PC-3 (cell line): ENCODE measurements at regions of chr17 and their contacts with region 1.

Region 1: DNA sequence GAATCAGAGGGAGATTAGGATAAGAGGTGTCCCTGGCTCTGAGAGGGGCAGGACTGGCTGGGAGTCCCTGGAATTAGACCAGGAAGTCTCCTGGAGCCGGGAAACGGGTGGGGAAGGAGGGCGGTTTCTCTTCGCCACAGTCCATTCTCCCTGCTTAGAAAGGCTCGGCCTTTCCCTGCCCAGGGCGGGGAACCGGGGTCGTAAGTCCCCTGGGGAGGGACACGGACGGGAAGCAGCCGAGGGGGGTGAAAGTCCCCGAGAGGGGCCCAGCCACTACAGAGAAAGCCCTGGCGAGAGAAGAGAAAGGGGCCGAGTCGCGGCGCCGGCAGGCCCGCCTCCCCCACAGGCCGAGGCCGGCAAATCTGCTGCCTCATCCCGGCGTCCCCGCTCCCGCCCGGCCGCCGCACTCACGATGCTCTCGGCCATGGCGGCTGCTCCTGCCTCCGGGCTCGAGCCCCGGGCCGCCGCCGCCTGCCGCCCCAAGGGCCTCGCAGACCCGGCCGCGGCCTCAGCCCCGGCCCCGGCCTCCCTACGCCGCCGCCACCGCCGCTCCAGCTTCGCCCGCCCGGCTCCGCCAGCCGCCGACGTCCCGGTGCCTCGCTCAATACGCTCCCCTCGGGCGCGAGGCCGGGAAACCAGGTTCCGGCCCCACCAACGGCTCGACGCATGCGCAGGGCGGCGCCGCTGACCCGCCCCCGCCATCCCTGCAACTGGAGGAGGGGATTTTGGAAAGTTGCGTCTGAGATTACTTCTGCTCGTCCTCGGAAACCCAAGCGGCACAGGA is at the starts of genes NPLOC4 and TSPAN10:
- DNase-seq: peak; percentile 88
- ATAC-seq: peak; percentile 80
- H3K4me3 ChIP-seq: peak within 1 kb of the TSS; percentile 100
- H3K27ac ChIP-seq: peak within 1 kb of the TSS; percentile 89
- H3K4me1 ChIP-seq: peaks cover 11% of the 10 kb centered on the region
- H3K27me3 ChIP-seq: no peaks in the 10 kb centered on the region
- CTCF ChIP-seq: no peak
- total RNA-seq, gene NPLOC4: 109 and 133 TPM in 2 replicates
- total RNA-seq, gene TSPAN10: 3.5 and 3.9 TPM in 2 replicates

Region 2: GRCh38 chr17:81583589-81584342 is 52.9 kb before region 1 on chr17:
- CTCF ChIA-PET with region 1: no interaction called
- POLR2A ChIA-PET with region 1: no interaction called
- intact Hi-C with region 1: no loop called
- DNase-seq: peak; percentile 86
- ATAC-seq: peak; percentile 89
- H3K4me3 ChIP-seq: no peak overlapping the region
- H3K27ac ChIP-seq: peak overlapping the region; percentile 45
- H3K4me1 ChIP-seq: peaks cover 28% of the 10 kb centered on the region
- H3K27me3 ChIP-seq: no peaks in the 10 kb centered on the region
- CTCF ChIP-seq: no peak

Region 3: GRCh38 chr17:81601525-81602120 is 35.1 kb before region 1 on chr17:
- CTCF ChIA-PET with region 1: no interaction called
- POLR2A ChIA-PET with region 1: no interaction called
- intact Hi-C with region 1: no loop called
- DNase-seq: peak; percentile 84
- ATAC-seq: peak; percentile 99
- H3K4me3 ChIP-seq: no peak overlapping the region
- H3K27ac ChIP-seq: no peak overlapping the region
- H3K4me1 ChIP-seq: no peaks in the 10 kb centered on the region
- H3K27me3 ChIP-seq: no peaks in the 10 kb centered on the region
- CTCF ChIP-seq: peak; percentile 92

Region 4: GRCh38 chr17:81666342-81667191 is 29.9 kb after region 1 on chr17 and contains the starts of genes CCDC137 and OXLD1:
- CTCF ChIA-PET with region 1: interaction called, 7 read pairs
- POLR2A ChIA-PET with region 1: no interaction called
- intact Hi-C with region 1: loop called (anchors 2 kb)
- DNase-seq: peak; percentile 97
- ATAC-seq: peak; percentile 98
- H3K4me3 ChIP-seq: peak within 1 kb of the TSS; percentile 93
- H3K27ac ChIP-seq: peak within 1 kb of the TSS; percentile 69
- H3K4me1 ChIP-seq: peaks cover 35% of the 10 kb centered on the region
- H3K27me3 ChIP-seq: no peaks in the 10 kb centered on the region
- CTCF ChIP-seq: no peak
- total RNA-seq, gene CCDC137: 49.9 and 71.0 TPM in 2 replicates
- total RNA-seq, gene OXLD1: 46.7 and 68.9 TPM in 2 replicates

Region 5: DNA sequence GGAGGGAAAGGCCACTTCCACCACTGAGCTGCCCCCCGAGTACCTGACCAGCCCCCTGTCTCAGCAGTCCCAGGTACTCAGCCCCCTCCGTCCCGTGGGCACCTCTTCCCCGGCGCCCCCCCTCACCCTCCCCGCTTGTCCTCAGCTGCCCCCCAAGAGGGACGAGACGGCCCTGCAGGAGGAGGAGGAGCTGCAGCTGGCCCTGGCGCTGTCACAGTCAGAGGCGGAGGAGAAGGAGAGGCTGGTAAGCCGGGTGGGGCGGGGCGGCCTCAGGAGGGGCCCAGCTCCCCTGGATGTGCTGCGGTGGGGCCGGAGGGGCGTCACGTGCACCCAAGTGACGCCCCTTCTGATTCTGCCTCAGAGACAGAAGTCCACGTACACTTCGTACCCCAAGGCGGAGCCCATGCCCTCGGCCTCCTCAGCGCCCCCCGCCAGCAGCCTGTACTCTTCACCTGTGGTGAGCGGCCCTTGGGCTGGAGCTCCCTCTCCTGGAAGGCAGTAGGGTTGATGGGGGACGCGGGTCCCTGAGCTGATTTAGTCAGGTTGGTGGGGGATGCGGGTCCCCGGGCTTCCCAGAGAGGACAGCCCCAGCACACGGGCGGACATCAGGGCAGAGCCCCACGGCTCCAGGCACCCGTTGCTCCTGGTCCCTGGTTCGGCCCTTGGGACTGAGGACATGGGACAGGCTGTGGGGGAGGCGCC is 57.0 kb after region 1 on chr17:
- CTCF ChIA-PET with region 1: no interaction called
- POLR2A ChIA-PET with region 1: no interaction called
- intact Hi-C with region 1: no loop called
- DNase-seq: no peak
- ATAC-seq: peak; percentile 12; the same call in 1 of the 2 replicates
- H3K4me3 ChIP-seq: no peak overlapping the region
- H3K27ac ChIP-seq: no peak overlapping the region
- H3K4me1 ChIP-seq: no peaks in the 10 kb centered on the region
- H3K27me3 ChIP-seq: no peaks in the 10 kb centered on the region
- CTCF ChIP-seq: peak; percentile 51